Posterior cingulate gyrus (tissue), 11 donors: ENCODE measurements at regions of chr12 and their contacts with region 1.

Region 1: DNA sequence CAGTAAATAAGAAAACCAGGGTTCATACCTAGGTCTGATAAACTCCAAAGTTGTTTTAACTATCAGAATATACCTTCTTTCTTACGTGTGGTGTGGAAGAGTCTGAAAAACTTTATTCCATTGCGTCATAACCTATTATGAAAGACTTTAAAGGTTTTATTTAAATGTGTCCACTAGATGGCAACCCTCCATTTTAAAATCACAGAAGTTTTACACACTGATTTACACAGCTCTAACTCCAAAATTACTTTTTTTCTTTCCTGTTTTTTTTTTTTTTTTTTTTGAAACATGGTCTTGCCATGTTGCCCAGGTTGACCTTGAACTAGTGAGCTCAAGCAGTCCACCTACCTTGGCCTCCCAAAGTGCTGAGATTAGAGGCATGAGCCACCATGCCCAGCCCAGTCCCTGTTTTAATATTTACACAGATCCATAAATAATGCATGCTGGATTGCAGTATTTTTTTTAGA is 17.3 kb upstream of the TMPRSS12 start:
- DNase-seq: no peak

Region 2: DNA sequence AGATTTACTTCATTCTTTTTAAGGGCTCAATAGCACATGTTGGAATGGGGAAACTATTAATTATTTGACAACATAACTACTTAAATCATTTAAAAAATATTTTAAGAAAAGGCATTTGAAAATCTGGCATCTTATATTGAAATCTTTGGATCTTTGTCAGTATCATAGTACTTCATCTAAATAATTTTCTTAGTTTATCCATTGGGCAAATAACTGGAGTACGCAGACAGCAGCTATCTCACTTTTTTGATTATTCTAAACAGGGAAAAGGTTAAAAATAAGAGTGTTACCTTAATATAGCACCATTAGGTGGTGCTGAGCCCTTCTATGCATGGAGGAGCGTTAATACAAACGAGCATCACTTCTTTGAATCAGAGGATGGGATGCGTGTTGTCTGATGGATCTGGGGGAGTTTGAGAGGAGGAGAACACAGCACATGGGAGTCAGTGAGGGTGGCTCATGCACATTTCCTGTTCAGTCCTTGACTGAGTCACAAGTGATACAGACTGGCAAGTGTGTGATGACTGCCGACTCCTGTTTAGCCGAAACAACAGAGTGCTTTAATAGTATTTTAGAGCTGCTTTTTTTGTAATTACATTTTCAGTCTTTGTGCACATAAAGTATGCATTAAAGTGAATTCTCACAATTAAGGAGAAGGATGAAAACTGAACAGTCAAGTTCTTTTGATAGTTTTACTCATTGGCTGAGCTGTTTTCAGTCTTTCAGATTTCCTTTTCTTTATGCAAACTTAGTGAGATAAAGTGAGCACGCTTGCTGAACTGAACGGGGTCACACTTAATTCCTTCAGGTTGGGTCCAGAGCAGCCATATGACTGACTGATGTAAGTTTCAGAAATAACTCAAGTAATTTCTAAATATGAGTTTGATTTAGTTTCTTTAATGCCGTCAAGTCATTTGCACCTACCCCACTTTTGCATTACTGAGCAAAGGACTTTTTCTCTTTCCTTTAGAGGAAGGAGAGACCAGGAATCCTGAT is 227.9 kb before region 1 on chr12:
- intact Hi-C with region 1: no loop called
- DNase-seq: peak in 2 of 10 donors; percentile 15 to 28

Region 3: DNA sequence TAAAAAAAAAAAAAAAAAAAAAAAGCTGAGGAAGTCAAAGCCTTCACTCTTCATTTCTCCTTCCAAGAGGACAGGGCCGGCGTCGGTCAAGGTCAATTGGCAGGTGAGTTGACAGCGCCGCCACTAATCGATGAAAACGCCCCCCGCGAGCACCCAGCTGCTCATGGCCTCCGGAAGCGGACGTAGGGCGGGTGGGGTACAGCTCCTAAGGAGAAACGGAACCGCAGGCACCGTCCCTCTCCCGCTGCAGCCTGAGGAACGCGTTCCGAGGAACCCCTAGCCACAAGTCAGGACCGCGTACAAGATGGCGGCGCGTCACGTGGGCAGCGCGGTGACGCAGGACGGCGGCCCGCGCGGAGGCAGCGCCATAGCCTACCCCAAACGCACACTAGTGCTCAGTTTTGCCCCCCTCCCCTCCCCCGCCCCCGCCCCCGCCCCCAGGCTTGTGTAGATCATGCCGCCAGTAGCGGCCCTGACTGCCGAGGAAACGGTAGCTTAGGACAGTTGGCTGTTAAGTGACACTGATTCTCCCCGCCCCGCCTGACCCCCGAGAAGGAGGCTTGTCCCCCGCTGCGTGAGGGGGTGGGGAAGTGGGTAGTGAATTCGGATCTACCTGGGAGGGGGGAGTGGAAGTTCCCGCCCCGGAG is 61.6 kb before region 1 on chr12 and contains the start of gene ATF1:
- intact Hi-C with region 1: no loop called
- DNase-seq: peak; percentile 85 to 99 (median 90)

Region 4: DNA sequence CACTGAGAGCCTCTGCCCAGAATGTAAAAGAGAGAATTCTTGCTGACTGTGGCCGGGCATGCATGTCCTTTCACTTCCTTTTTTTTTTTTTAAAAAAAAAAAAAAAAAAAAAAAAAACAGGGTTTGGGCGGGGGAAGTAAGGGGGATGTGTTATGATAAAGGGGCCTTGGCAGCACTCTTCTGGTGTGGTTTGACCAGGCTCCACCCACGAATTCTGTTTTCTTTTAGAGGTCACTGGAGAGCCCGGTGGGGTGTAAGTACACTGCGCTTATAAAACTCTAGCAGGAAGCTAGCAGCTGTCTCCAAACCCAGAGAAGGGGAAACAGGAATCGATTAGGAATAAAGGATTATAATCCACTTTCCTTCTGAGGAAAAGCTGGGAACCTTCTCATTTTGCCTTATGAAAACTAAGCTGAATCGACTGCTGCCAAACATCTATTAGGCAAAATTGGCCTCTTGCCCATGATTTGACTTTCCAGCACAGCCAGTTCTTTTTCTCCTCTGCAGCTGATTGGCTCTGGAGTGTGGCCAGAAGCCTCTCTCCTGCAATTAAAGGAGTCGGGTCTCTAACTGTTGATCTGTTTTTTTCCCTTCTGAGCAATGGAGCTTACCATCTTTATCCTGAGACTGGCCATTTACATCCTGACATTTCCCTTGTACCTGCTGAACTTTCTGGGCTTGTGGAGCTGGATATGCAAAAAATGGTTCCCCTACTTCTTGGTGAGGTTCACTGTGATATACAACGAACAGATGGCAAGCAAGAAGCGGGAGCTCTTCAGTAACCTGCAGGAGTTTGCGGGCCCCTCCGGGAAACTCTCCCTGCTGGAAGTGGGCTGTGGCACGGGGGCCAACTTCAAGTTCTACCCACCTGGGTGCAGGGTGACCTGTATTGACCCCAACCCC is 99.3 kb after region 1 on chr12:
- intact Hi-C with region 1: loop called (anchors 5 kb)
- DNase-seq: peak; percentile 60 to 95 (median 80)

Region 5: DNA sequence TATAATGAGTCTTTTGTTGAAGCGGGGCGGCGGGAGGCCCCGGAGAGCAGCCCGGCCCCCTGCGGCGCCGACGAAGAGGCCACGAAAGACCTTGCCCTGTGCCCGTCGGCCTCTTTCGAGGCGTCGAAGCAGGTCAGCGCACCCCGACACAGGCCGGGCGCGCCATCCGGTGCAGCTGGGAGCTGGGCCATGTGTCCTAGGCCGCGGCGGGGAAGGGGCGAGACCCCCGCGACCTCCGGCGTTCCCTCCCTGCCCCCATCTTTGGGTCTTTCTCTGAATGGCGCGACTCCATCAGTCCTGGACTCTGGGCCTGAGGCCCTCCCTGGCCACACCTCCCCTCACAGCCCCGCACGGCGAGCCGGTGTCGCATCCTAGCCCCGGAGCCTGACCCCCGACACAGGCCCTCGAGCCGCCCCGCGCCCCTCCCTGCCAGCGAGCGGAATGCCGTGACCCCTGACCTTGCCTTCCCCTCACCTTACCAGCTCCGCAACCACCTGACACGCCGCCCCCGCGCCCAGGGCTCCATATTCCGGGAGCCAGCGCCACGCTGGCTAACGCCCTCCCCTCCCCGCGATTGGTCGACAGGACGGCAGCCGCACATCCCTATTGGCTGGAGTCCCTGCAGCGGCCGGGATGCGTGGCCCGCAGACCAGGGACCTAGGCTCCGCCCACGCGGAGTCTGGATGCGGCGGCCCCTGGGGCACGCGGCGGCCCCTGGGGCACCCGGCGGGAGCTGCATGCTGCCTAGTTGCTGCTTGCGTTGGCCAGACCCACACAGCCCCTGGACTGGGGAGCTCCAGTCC is 200.6 kb after region 1 on chr12 and contains the start of gene SLC11A2:
- intact Hi-C with region 1: loop called (anchors 5 kb)
- DNase-seq: peak; percentile 95 to 100 (median 96)

Region 6: DNA sequence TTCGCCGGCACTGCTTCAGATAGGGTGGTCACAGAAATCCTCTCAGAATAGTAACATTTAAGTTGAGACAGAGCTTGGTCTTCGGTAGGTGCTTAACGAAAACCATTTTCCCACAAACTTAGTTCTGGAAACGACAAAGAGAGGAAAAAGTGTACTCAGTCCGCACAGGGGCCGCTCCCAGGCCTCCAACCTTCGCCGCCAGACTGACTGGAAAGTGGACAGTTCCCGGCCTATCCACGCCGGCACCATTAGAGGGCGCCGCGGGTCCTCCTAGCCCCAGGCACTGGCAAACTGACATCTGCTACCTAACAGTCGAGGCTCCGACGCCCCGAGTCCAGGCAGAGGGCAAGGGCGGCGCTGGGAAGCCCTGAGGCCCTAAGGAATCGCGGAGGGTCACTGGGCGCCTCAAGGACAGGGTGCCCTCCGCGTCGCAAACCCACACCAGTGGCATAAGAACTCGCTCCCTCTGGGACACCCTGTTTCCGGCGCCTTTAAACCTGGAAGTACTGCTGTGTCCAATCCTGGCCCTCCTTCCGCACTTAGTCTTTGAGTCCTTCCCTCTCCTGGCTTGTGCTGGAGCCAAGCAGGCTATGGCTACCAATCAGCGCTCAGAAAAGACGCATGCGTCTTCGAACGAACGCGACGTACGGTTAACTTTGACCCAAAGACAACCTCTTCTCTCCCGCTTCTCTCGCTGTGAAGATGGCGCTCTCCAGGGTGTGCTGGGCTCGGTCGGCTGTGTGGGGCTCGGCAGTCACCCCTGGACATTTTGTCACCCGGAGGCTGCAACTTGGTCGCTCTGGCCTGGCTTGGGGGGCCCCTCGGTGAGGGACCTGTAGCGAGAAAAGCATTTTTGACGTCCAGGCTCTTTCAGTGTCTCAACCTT is 222.5 kb after region 1 on chr12 and contains the start of gene LETMD1:
- intact Hi-C with region 1: loop called (anchors 5 kb)
- DNase-seq: peak; percentile 91 to 99 (median 95)